Esophagus muscularis mucosa (tissue), 4 donors: ENCODE measurements at regions of chr20 and their contacts with region 1.

Region 1: GRCh38 chr20:58481481-58482021 is 33.6 kb downstream of the APCDD1L start:
- DNase-seq: no peak
- H3K4me3 ChIP-seq: no peak overlapping the region
- H3K27ac ChIP-seq: no peak overlapping the region
- H3K4me1 ChIP-seq: peaks cover 0 to 7% (median 7%) of the 10 kb centered on the region in 4 donors
- H3K27me3 ChIP-seq: no peaks in the 10 kb centered on the region
- CTCF ChIP-seq: peak; percentile 70 to 80 (median 77)
- EP300 ChIP-seq: no peak
- POLR2A ChIP-seq: no peak

Region 2: GRCh38 chr20:58692594-58693226 is 211.2 kb after region 1 on chr20 and contains the start of gene NPEPL1:
- intact Hi-C with region 1: loop called (anchors 2 kb)
- DNase-seq: no peak
- H3K4me3 ChIP-seq: peak within 1 kb of the TSS; percentile 54 to 78 (median 62)
- H3K27ac ChIP-seq: peak within 1 kb of the TSS; percentile 86 to 97 (median 96)
- H3K4me1 ChIP-seq: peaks cover 30 to 55% (median 55%) of the 10 kb centered on the region in 4 donors
- H3K27me3 ChIP-seq: no peaks in the 10 kb centered on the region
- CTCF ChIP-seq: peak in 2 of 3 experiments; percentile 40 to 49
- EP300 ChIP-seq: no peak
- POLR2A ChIP-seq: no peak
- total RNA-seq, gene NPEPL1: 29.0 to 59.0 (median 50.5) TPM

Region 3: GRCh38 chr20:58839474-58839874 is 357.9 kb after region 1 on chr20:
- intact Hi-C with region 1: loop called (anchors 10 kb)
- DNase-seq: no peak
- H3K4me3 ChIP-seq: peak overlapping the region; percentile 20 to 36 (median 29)
- H3K27ac ChIP-seq: no peak overlapping the region
- H3K4me1 ChIP-seq: peaks cover 0 to 27% (median 20%) of the 10 kb centered on the region in 4 donors
- H3K27me3 ChIP-seq: peaks cover 0 to 66% (median 14%) of the 10 kb centered on the region in 4 donors
- CTCF ChIP-seq: peak; percentile 38 to 52 (median 47)
- EP300 ChIP-seq: no peak
- POLR2A ChIP-seq: no peak